ENCODE measurements at regions of chr17 and their contacts with region 1.

Region 1: DNA sequence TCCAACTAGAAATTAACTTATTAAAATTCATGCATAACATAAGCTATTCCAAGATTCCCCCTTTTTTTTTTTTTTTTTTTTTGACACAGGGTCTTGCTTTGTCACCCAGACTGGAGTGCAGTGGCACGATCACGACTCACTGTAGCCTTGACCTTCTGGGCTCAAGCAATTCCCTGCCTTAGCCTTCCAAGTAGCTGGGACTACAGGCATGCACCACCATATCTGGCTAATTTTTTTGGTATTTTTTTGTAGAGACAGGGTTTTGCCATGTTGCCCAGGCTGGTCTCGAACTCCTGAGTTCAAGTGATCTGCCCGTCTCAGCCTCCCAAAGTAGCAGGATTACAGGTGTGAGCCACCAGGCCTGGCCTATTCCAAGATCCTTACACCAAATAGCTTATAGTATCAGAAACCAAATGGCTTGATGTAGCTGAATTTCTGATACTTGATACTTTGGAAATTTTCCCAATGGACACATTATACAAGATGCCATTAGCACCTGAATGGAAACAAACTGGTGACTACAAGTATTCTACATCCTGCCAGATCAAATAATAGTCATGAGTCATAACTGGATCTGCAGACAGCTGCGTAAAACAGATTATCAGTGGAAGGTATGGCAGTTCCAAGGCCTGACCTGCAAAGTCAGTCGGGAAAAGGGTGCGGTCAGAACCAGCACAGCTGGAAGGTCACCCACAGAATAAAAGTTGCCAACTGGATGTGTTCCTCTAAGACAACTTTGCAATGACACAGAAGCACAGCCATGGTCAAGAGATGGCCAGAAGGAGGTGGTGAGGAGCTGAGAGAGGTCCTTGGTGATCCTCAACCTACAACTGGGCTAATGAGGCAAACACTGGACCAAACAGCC is 14.5 kb downstream of the TUBG1 start:
- DNase-seq: peak; percentile 91
- ATAC-seq: peak; percentile 98
- H3K4me3 ChIP-seq: no peak overlapping the region
- H3K27ac ChIP-seq: peak overlapping the region; percentile 28
- H3K4me1 ChIP-seq: peaks cover 12% of the 10 kb centered on the region
- H3K27me3 ChIP-seq: no peaks in the 10 kb centered on the region
- CTCF ChIP-seq: peak; percentile 24; the same call in 1 of the 2 replicates

Region 2: DNA sequence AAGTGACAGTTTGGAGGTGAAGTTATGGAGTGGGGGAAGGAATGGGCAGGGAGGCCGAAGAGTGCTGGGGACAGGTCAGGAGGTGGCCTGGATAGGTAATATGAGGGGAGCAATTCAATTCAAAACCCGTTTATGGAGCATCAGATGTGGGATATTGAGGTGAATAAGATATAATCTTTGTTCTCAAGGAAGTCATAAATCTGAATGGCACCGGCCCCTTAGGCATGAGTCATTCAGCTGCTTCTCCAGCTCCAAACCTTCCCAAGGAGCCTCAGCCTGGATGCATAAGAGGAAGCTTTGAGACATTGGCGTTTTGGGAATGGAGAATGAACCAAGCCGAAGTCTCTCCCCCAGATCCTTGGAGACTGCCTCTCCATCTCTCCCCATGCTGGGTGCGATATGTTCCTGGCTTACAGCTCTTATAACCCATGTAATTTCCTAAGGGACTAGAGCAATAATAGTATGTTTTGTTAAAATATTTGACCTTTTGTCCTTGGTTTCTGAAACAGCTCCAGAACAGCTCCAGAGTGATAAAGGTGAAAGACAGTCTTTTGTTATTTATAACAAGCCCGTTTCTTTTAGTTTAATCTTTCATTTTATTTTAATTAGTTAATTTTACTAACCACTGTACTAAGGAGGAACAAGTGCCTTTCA is 36.9 kb after region 1 on chr17:
- CTCF ChIA-PET with region 1: no interaction called
- POLR2A ChIA-PET with region 1: interaction called, 5 read pairs
- intact Hi-C with region 1: loop called (anchors 2 kb)
- DNase-seq: peak; percentile 77
- ATAC-seq: peak; percentile 66
- H3K4me3 ChIP-seq: no peak overlapping the region
- H3K27ac ChIP-seq: peak overlapping the region; percentile 43
- H3K4me1 ChIP-seq: peaks cover 21% of the 10 kb centered on the region
- H3K27me3 ChIP-seq: no peaks in the 10 kb centered on the region
- CTCF ChIP-seq: no peak